Sciatic nerve (tissue), 2 donors: ENCODE measurements at regions of chr12 and their contacts with region 1.

Region 1: GRCh38 chr12:12983420-12984035 is 16.5 kb downstream of the HEBP1 start:
- DNase-seq: no peak
- ATAC-seq: peak; percentile 72

Region 2: DNA sequence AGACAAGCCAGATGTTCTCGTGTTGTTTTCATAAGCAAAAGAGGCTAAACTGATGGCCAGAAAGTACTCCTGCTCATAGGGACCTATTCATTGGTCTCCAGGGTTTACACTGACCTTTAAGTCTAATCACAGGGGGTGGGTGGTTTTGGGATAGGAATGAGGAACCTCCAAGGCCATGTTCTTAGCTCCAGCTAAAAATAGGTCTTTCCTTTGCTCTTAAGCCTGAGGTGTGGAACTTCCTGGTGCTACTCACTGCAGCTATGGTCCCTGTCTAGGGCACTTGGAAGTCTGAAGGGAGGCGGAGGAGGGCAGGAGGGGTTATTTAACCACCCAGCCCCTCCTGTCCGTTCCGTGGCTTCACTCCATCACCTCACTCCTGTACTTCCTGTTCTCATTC is 73.5 kb before region 1 on chr12:
- intact Hi-C with region 1: loop called (anchors 5 kb)
- DNase-seq: peak; percentile 51
- ATAC-seq: peak; percentile 74

Region 3: DNA sequence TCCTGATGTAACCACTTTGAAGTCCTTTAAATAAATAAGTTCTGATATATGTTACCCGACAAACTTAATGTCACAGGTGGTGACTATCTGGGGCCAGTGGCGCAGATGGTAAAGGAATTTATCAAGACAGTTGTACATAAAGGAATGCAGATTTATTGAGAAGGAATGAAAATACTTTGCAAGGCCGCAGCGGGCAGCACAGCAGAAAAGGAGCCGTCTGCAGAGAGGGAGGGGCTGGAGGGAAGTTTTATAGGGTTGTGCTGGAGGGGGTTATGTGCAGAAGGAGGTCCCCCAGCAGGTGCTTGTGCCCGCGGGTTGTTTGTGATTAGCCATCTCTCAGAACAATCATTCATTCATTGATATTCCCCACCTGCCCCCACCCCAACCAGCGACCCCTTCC is 49.0 kb before region 1 on chr12:
- intact Hi-C with region 1: no loop called
- DNase-seq: no peak
- ATAC-seq: no peak

Region 4: DNA sequence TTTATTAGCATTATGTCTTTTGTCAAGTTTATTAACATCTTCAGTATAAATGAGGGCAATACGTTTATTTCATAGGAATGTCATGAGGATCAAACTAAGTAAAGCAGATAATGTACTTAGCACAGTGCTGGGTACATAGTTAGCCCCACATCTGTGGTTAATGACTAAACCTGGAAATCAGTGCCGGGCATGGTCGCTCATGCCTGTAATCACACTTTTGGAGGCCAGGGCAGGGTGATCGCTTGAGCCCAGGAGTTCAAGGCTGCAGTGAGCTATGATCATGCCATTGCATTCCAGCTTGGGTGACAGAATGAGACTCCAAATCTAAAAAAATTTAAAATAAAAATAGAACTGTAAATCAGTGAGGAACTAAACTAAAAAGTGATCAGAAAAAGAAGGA is 1757.6 kb after region 1 on chr12:
- intact Hi-C with region 1: no loop called
- DNase-seq: no peak
- ATAC-seq: no peak